ENCODE measurements at regions of chr7 and their contacts with region 1.

Region 1: GRCh38 chr7:140334341-140335057 is 63.8 kb downstream of the SLC37A3 start:
- DNase-seq: no peak
- H3K4me3 ChIP-seq: no peak overlapping the region
- H3K27ac ChIP-seq: no peak overlapping the region
- H3K4me1 ChIP-seq: no peaks in the 10 kb centered on the region
- H3K27me3 ChIP-seq: no peaks in the 10 kb centered on the region
- CTCF ChIP-seq: no peak

Region 2: DNA sequence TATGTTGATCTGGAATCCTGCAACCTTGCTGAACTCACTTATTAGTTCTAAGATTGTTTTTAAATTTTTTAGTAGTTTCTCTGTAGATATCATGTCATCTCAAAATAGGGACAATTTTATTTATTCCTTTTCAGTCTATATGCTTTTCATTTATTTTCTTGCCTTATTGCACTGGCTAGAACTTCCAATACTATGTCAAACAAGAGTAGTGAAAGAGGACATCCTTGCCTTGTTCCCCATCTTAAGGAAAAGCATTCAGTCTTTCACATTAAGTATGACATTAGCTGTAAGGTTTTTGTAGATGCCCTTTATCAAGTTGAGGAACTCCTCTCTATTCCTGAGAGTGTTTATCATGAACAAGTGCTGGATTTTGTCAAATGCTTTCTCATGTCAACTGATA is 427.6 kb before region 1 on chr7:
- CTCF ChIA-PET with region 1: no interaction called
- POLR2A ChIA-PET with region 1: interaction called, 20 read pairs
- intact Hi-C with region 1: no loop called
- DNase-seq: no peak
- H3K4me3 ChIP-seq: no peak overlapping the region
- H3K27ac ChIP-seq: no peak overlapping the region
- H3K4me1 ChIP-seq: no peaks in the 10 kb centered on the region
- H3K27me3 ChIP-seq: no peaks in the 10 kb centered on the region
- CTCF ChIP-seq: no peak